Dorsolateral prefrontal cortex (tissue), 120 donors: ENCODE measurements at regions of chr16 and their contacts with region 1.

Region 1: DNA sequence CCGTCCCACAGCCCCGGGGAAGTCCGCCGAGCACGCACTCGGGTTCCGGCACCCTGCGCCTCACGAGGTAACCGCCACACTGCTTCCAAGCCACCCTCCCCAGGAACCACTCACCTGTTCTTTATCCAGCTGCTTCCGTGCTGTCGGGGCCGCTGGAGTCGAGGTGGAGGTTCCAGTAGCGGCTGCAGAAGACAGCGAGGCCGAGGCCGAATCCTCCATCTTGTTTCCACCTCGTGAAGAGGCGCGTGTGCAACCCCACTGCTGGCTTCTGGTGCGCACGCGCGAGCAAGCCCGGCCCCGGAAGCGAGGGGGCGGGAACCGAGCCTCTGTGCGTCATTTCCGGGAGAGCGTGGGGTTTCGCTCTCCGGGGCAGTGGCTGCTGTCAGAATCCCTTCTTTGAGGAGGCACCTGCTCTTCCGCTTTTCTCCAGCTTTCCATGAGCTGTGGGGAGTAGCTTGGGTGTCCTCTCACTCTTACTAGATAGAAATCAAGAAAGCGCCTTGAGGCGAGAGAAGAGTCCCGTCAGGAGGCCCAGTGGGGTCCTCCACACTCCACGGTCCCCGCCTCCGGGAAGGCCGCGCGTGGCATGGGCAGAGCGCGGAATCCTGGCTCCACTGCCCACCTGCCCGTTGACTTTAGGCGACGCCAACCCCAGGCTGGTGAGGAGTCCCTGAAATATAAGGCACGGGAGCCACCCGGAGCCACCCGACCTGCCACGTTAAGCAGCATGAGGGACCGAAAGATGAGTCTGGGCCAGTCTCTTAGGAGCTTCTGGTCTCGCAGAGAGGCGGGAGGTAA is at the start of gene RSL1D1:
- DNase-seq: peak; percentile 75 to 96 (median 84)
- H3K4me3 ChIP-seq: peak within 1 kb of the TSS; percentile 69 to 100 (median 96)
- H3K27ac ChIP-seq: peak within 1 kb of the TSS; percentile 28 to 93 (median 80)
- H3K27me3 ChIP-seq: no peaks in the 10 kb centered on the region
- CTCF ChIP-seq: peak in 23 of 56 donors; percentile 7 to 48 (median 24)
- total RNA-seq, gene RSL1D1: 43.9 to 94.5 (median 65.1) TPM

Region 2: GRCh38 chr16:11742539-11743307 is 108.8 kb before region 1 on chr16 and contains the start of gene TXNDC11:
- intact Hi-C with region 1: loop called in 1 of 2 experiments (anchors 5 kb)
- DNase-seq: peak; percentile 98 to 100 (median 98)
- H3K4me3 ChIP-seq: peak within 1 kb of the TSS; percentile 62 to 98 (median 92)
- H3K27ac ChIP-seq: peak within 1 kb of the TSS; percentile 35 to 97 (median 93)
- H3K27me3 ChIP-seq: no peaks in the 10 kb centered on the region
- CTCF ChIP-seq: peak in 22 of 56 donors; percentile 6 to 53 (median 24)
- total RNA-seq, gene TXNDC11: 16.0 to 38.5 (median 26.0) TPM

Region 3: GRCh38 chr16:11797166-11797956 is 54.1 kb before region 1 on chr16 and contains the start of gene ZC3H7A:
- intact Hi-C with region 1: loop called in 1 of 2 experiments (anchors 1 kb)
- DNase-seq: peak; percentile 88 to 98 (median 96)
- H3K4me3 ChIP-seq: peak within 1 kb of the TSS; percentile 55 to 98 (median 92)
- H3K27ac ChIP-seq: peak within 1 kb of the TSS; percentile 78 to 99 (median 94)
- H3K27me3 ChIP-seq: no peaks in the 10 kb centered on the region
- CTCF ChIP-seq: peak; percentile 50 to 94 (median 74)
- total RNA-seq, gene ZC3H7A: 40.0 to 83.3 (median 56.8) TPM

Region 4: DNA sequence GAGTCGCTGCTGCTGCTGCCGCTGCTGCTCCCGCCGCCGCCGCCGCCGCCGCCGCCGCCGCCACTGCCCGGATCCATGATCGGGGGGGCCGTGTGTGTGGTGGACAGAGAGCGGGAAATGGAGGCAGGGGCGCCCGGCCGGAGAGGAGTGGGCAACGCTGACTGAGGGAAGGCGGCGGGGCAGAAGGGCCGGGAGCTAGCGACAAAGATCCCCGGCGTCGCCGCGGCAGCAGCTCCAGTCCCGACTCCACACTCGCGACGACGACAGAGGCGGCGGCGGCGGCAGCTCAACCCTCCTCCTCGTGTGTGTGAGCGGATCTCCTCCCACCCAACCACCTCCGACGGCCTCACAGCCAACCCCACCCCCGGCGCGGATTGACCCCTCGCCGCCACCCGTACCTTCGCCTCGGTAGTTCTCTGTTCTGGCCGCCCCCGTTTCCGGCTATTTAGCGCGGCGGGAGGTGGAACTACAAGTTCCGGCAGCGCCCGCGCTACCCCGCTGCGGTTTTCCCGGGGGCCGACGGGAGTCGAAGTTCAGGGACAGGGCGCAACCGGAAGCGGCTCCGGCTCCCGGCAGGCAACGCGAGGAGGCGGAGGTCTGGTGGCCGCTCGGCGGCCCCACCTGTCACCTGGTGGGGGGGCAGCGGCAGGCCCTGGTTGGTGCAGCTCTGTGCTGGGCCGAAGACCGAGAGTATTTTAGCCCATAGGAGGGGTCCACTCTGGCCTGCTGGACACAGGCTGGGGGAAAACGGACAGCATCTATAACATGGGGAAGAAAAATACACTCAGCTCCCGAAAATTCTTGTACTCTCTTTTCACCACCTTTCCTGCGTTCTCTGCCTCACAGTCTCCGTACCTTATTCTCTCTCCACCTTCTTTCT is 64.4 kb after region 1 on chr16 and contains the start of gene GSPT1:
- intact Hi-C with region 1: loop called (anchors 2 kb)
- DNase-seq: peak; percentile 95 to 99 (median 98)
- H3K4me3 ChIP-seq: peak within 1 kb of the TSS; percentile 63 to 97 (median 83)
- H3K27ac ChIP-seq: peak within 1 kb of the TSS; percentile 69 to 97 (median 90)
- H3K27me3 ChIP-seq: no peaks in the 10 kb centered on the region
- CTCF ChIP-seq: peak in 39 of 56 donors; percentile 7 to 50 (median 30)
- total RNA-seq, gene GSPT1: 60.6 to 112 (median 78.0) TPM

Region 5: DNA sequence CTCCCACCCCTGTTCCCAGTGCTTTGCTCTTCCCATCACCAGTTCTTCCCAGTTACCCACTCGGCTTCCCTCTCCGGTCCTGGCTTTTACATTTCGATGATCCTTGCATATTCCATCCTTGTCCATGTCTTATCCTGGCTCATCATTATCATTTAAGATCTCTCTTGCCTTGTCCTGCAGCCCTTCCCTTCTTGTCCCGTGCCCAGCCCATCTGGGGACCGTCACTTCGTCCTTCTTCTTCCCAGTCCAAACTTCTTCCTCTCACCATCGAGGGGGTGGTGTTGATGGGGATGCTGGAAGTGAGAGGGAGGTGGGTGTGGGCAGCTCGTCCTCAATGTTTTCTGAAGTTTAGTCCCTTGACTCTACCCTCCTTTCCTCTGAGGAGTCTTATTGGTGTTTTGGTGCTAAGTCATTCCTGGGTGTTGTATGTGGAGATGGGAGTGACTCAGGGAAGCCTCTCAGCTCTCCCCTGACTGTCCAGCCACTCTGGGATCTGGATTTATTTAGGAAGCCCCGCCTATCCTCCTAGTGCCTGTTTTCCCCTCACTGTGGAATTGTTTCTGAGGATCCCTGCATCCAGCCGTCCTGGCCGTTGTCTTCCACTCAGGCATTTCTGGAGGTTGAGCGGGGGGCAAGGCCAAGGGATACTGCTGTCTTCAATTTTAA is 126.0 kb after region 1 on chr16:
- intact Hi-C with region 1: loop called in 1 of 2 experiments (anchors 10 kb)
- DNase-seq: peak in 4 of 10 donors; percentile 11 to 55 (median 33)
- H3K4me3 ChIP-seq: peak overlapping the region; percentile 67 to 100 (median 95)
- H3K27ac ChIP-seq: peak overlapping the region in 45 of 59 donors; percentile 4 to 94 (median 82)
- H3K27me3 ChIP-seq: no peaks in the 10 kb centered on the region
- CTCF ChIP-seq: no peak

Region 6: GRCh38 chr16:11994143-11995119 is 142.9 kb after region 1 on chr16:
- intact Hi-C with region 1: no loop called
- DNase-seq: peak in 9 of 10 donors; percentile 38 to 81 (median 64)
- H3K4me3 ChIP-seq: no peak overlapping the region
- H3K27ac ChIP-seq: peak overlapping the region in 58 of 59 donors; percentile 18 to 92 (median 81)
- H3K27me3 ChIP-seq: no peaks in the 10 kb centered on the region
- CTCF ChIP-seq: no peak

Region 7: GRCh38 chr16:12067714-12068401 is 216.4 kb after region 1 on chr16:
- intact Hi-C with region 1: loop called in 1 of 2 experiments (anchors 5 kb)
- DNase-seq: peak in 6 of 10 donors; percentile 19 to 79 (median 64)
- H3K4me3 ChIP-seq: no peak overlapping the region
- H3K27ac ChIP-seq: peak overlapping the region in 6 of 59 donors; percentile 3 to 40 (median 28)
- H3K27me3 ChIP-seq: no peaks in the 10 kb centered on the region
- CTCF ChIP-seq: peak; percentile 69 to 99 (median 95)